ENCODE measurements at regions of chr14 and their contacts with region 1.

Region 1: GRCh38 chr14:75771595-75771994 is 110.5 kb downstream of the TTLL5 start:
- DNase-seq: no peak
- ATAC-seq: no peak
- H3K4me3 ChIP-seq: no peak overlapping the region
- H3K27ac ChIP-seq: no peak overlapping the region
- H3K4me1 ChIP-seq: no peaks in the 10 kb centered on the region
- H3K27me3 ChIP-seq: no peaks in the 10 kb centered on the region
- CTCF ChIP-seq: no peak

Region 2: GRCh38 chr14:75689012-75689411 is 82.6 kb before region 1 on chr14:
- CTCF ChIA-PET with region 1: no interaction called
- POLR2A ChIA-PET with region 1: interaction called, 14 read pairs
- in situ Hi-C with region 1: no loop called
- intact Hi-C with region 1: no loop called
- DNase-seq: no peak
- ATAC-seq: no peak
- H3K4me3 ChIP-seq: no peak overlapping the region
- H3K27ac ChIP-seq: no peak overlapping the region
- H3K4me1 ChIP-seq: no peaks in the 10 kb centered on the region
- H3K27me3 ChIP-seq: no peaks in the 10 kb centered on the region
- CTCF ChIP-seq: no peak

Region 3: DNA sequence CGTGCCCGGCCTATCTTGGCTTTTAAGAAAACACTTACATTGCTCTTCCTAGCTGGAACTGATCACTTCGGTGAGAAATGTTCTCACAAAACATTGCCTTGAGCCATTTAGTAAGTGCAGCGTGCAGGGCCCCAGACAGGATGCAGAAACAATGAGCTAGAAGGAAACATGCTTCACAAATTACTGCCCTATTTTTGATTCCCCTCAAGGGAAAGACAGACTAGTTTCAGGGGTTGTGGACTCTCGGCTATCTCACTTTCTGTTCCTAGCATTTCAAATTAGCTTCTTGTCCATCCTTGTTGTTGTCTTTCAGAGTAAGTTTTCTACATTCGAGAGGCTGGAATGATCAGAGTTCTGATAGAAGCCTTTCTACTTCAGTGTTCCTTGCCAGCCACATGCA is 188.6 kb after region 1 on chr14:
- CTCF ChIA-PET with region 1: no interaction called
- POLR2A ChIA-PET with region 1: no interaction called
- in situ Hi-C with region 1: no loop called
- intact Hi-C with region 1: no loop called
- DNase-seq: no peak
- ATAC-seq: no peak
- H3K4me3 ChIP-seq: no peak overlapping the region
- H3K27ac ChIP-seq: no peak overlapping the region
- H3K4me1 ChIP-seq: no peaks in the 10 kb centered on the region
- H3K27me3 ChIP-seq: no peaks in the 10 kb centered on the region
- CTCF ChIP-seq: no peak

Measured in Panc1 (cell line).